ENCODE measurements at regions of chr5 and their contacts with region 1.

Region 1: DNA sequence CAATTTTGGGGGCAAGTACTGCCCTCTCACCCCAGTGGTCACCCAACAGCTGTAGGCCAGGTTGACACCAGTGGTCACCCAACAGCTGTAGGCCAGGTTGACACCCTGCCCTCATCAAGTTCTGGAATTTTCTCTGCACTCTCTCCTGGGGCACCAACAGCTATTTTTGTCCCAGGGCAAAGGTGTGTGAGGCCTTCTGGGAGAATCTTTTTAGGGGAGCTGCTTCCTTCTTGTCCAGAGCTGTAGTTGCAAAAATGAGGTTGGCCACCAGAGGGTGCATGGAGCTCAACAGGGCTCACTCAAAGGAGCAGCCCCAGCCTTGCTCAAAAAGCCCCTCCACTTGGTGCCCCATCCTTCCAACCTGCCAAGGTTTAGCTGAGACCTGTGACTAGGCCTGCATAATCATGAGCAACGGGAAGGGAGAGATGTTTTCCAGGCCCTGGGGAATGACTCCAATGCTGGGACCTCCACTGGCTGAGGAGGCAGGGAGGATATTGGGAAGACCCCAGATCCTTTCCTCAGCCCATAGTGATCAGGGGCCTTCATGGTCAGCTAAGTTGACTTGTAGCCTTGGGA is 10.6 kb upstream of the P4HA2 start:
- DNase-seq: peak; percentile 75 to 89 (median 76)
- ATAC-seq: peak; percentile 76 to 80
- H3K4me3 ChIP-seq: no peak overlapping the region
- H3K27ac ChIP-seq: no peak overlapping the region
- H3K4me1 ChIP-seq: no peaks in the 10 kb centered on the region
- H3K27me3 ChIP-seq: no peaks in the 10 kb centered on the region

Region 2: GRCh38 chr5:132283423-132284043 is 45.3 kb after region 1 on chr5:
- intact Hi-C with region 1: loop called in 1 of 4 experiments (anchors 10 kb)
- DNase-seq: peak in 2 of 3 donors; percentile 47 to 67
- ATAC-seq: peak; percentile 44 to 56
- H3K4me3 ChIP-seq: no peak overlapping the region
- H3K27ac ChIP-seq: no peak overlapping the region
- H3K4me1 ChIP-seq: no peaks in the 10 kb centered on the region
- H3K27me3 ChIP-seq: no peaks in the 10 kb centered on the region

Measured in right cardiac atrium (tissue), 5 donors.